ENCODE measurements at regions of chr7 and their contacts with region 1.

Region 1: GRCh38 chr7:20199015-20199737 is 18.0 kb downstream of the MACC1 start:
- DNase-seq: peak; percentile 42
- CTCF ChIP-seq: no peak

Region 2: GRCh38 chr7:20158684-20159083 is 40.5 kb before region 1 on chr7:
- CTCF ChIA-PET with region 1: interaction called, 10 read pairs
- POLR2A ChIA-PET with region 1: no interaction called
- DNase-seq: no peak
- CTCF ChIP-seq: peak; percentile 47

Region 3: GRCh38 chr7:20214132-20214531 is 15.0 kb after region 1 on chr7:
- CTCF ChIA-PET with region 1: interaction called, 41 read pairs
- POLR2A ChIA-PET with region 1: interaction called, 5 read pairs
- DNase-seq: no peak
- CTCF ChIP-seq: no peak

Region 4: DNA sequence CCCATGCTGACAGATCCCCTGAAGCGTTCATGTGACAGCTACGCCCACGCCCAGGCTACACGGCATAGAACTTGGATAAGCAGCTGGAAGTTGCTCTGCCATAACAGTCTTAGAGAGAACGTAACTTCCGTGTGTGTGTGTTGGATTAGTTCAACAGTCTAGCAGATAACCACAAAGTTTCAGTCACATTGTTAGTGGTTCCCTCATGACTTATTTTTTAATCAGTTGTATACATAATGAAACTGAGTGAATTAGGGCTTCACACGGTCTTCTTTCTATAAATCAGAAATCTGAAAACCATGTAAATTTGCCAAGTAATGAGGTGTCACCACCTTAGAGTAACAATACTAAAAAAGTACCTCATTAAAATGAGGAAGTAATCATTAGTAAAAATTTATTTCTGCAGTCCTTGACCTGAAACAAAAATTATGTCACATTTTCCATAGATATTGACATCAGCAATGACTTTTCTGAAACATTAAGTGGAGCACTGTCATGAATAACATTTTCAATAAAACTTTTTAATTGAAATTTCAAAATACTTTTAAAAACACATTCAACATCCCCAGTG is 39.7 kb after region 1 on chr7:
- CTCF ChIA-PET with region 1: interaction called, 14 read pairs
- POLR2A ChIA-PET with region 1: no interaction called
- DNase-seq: peak; percentile 35
- CTCF ChIP-seq: no peak